GM12878 (cell line): ENCODE measurements at regions of chr19 and their contacts with region 1.

Region 1: DNA sequence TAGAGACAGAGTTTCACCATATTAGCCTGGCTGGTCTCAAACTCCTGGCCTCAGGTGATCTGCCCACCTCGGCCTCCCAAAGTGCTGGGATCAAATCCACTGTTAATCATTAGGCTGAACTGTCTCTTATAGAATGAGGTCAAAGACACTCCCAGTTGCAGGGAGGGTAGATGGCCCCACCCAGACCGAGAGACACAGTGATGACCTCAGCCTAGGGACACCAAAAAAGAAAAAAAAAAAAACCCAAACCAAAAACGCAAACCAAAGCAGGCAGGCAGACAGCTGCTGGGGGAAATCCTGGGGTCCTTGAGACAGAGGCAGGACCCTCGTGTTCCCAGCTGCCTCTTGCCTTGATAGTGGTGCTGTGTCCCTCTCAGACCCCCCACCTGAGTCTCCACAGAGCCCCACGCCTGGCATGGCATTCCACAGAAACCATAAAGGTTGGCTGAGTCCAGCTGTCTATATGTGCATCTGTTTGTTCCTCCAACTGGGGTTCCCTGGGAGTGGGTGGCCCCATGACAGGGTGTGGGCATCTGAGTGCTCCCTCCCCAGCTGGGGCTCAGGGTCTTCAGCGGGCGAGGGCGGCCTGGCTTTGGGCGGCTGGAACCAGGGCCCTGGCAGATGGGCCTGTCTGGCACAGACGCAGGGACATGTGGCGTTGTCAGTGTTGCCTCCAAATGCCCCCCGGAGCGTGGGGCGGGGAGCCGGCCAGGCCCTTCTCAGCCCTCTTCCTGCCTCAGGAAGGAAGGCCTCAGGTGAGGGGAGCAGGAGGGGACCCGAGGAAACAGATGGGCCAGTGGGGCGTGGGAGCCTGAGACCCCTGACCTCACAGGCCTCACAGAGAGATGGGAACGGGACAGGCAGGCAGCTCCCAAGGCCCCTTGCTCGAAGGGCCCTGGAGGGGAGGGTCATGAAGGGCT is 5.2 kb downstream of the DAND5 start:
- DNase-seq: no peak
- ATAC-seq: peak; percentile 68
- H3K4me3 ChIP-seq: no peak overlapping the region
- H3K27ac ChIP-seq: no peak overlapping the region
- H3K4me1 ChIP-seq: no peaks in the 10 kb centered on the region
- H3K27me3 ChIP-seq: no peaks in the 10 kb centered on the region
- CTCF ChIP-seq: no peak
- EP300 ChIP-seq: no peak
- POLR2A ChIP-seq: no peak
- RAD21 ChIP-seq: no peak

Region 2: DNA sequence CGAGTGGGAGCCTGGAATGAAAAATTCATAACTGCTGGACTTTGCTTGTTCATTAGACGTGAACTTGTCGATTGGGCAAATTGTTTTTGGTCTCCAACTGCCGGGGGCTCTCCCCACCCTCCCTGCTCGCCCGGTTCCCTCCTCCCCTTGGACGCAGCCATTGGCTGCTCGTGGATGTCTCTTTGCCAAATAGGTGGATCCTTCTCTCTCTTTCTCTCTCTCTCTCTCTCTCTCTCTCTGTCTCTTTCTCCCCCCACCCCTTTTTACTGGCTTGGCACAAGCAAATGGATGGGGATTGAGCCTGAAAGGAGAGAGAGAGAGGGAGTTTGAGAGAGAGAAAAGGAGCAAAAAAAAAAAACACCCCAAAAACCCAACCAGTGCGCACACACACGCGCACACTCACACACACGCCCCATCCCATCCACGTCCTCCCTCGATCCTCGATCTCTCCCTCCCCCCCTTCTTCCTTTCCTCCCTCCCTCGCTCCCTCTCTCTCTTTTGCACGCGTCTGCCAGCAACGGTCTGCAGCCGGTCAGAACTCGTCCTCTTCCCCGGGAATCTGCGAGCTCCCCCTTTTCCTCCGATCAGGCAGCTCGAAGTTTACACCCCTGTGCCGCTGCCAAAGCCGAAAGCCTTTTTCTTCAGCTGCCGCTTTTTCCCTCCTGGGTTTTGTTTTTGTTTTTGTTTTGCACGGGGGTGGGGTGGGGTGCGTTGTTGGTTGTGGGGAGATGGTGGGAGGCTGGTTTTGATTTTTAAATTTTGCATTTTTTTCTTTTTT is 48.5 kb after region 1 on chr19:
- CTCF ChIA-PET with region 1: interaction called, 13 read pairs
- POLR2A ChIA-PET with region 1: no interaction called
- RAD21 ChIA-PET with region 1: interaction called, 3 read pairs
- SMC1A ChIA-PET with region 1: no interaction called
- in situ Hi-C with region 1: no loop called
- intact Hi-C with region 1: no loop called
- DNase-seq: no peak
- ATAC-seq: peak; percentile 73
- H3K4me3 ChIP-seq: peak overlapping the region; percentile 62
- H3K27ac ChIP-seq: 0 out of 2 replicates have a peak overlapping the region, but pooled peaks have one; percentile 40
- H3K4me1 ChIP-seq: peaks cover 16% of the 10 kb centered on the region
- H3K27me3 ChIP-seq: peaks cover 9 to 17% of the 10 kb centered on the region in 2 experiments
- CTCF ChIP-seq: no peak
- EP300 ChIP-seq: no peak
- POLR2A ChIP-seq: no peak
- RAD21 ChIP-seq: no peak

Region 3: GRCh38 chr19:13033819-13034611 is 59.5 kb after region 1 on chr19:
- CTCF ChIA-PET with region 1: interaction called, 30 read pairs
- POLR2A ChIA-PET with region 1: no interaction called
- RAD21 ChIA-PET with region 1: interaction called, 13 read pairs
- SMC1A ChIA-PET with region 1: interaction called, 4 read pairs
- in situ Hi-C with region 1: no loop called
- intact Hi-C with region 1: loop called (anchors 5 kb)
- DNase-seq: no peak
- ATAC-seq: peak; percentile 95
- H3K4me3 ChIP-seq: no peak overlapping the region
- H3K27ac ChIP-seq: no peak overlapping the region
- H3K4me1 ChIP-seq: no peaks in the 10 kb centered on the region
- H3K27me3 ChIP-seq: peaks cover 0 to 2% of the 10 kb centered on the region in 2 experiments; a peak in 2 of 4 replicates
- CTCF ChIP-seq: peak; percentile 71 to 93 (median 90)
- EP300 ChIP-seq: no peak
- POLR2A ChIP-seq: no peak
- RAD21 ChIP-seq: peak; percentile 65

Region 4: GRCh38 chr19:13060964-13061927 is 86.7 kb after region 1 on chr19:
- CTCF ChIA-PET with region 1: interaction called, 247 read pairs
- POLR2A ChIA-PET with region 1: no interaction called
- RAD21 ChIA-PET with region 1: interaction called, 49 read pairs
- SMC1A ChIA-PET with region 1: interaction called, 45 read pairs
- in situ Hi-C with region 1: no loop called
- intact Hi-C with region 1: loop called (anchors 2 kb)
- DNase-seq: peak; percentile 11
- ATAC-seq: peak; percentile 99
- H3K4me3 ChIP-seq: peak overlapping the region; percentile 34; the same call in 1 of the 2 replicates
- H3K27ac ChIP-seq: no peak overlapping the region
- H3K4me1 ChIP-seq: no peaks in the 10 kb centered on the region
- H3K27me3 ChIP-seq: peaks cover 9 to 11% of the 10 kb centered on the region in 2 experiments
- CTCF ChIP-seq: peak; percentile 94 to 97 (median 96); a peak in 5 of 6 replicates
- EP300 ChIP-seq: no peak
- POLR2A ChIP-seq: no peak
- RAD21 ChIP-seq: peak; percentile 80

Region 5: DNA sequence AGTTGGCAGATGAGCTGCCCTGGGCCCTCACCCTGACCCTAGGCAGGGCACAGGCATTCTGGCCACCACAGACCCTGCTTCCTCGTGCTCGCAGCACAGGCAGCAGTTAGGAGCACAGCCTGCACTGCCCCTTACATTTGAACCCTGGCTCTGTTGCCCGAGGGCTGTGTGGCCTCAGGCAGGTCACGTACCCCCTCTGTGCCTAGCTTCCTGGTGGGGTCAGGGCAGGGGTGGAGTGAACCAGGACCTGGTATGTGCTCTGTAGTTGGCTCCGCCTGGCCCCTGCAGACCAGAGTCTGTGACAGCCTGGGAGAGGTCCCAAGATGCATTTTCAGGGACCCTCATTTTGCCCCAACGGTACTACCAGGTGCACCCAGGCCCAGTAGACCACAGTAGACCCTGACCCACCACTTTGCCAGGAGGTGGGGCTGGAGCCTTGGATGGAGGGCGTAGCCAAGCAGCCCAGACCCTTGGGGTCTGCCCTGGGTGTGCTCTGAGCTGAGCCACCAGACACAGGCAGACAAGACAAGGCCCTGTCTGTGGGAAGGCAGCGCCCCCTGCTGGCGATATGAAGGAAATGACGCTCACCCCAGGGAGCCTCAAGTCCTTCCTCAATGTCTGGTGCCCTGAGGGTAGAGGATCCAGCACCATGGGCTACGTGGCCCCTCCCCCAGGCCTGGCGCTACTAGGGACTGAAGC is 119.0 kb after region 1 on chr19:
- CTCF ChIA-PET with region 1: interaction called, 145 read pairs
- POLR2A ChIA-PET with region 1: interaction called, 3 read pairs
- RAD21 ChIA-PET with region 1: interaction called, 81 read pairs
- SMC1A ChIA-PET with region 1: interaction called, 48 read pairs
- in situ Hi-C with region 1: loop called (anchors 5 kb)
- intact Hi-C with region 1: loop called (anchors 2 kb)
- DNase-seq: no peak
- ATAC-seq: peak; percentile 89
- H3K4me3 ChIP-seq: no peak overlapping the region
- H3K27ac ChIP-seq: no peak overlapping the region
- H3K4me1 ChIP-seq: peaks cover 17% of the 10 kb centered on the region
- H3K27me3 ChIP-seq: peaks cover 2 to 7% of the 10 kb centered on the region in 2 experiments; a peak in 3 of 4 replicates
- CTCF ChIP-seq: peak; percentile 89 to 95 (median 92)
- EP300 ChIP-seq: no peak
- POLR2A ChIP-seq: no peak
- RAD21 ChIP-seq: peak; percentile 95

Region 6: GRCh38 chr19:13099073-13099999 is 124.8 kb after region 1 on chr19:
- CTCF ChIA-PET with region 1: interaction called, 145 read pairs
- POLR2A ChIA-PET with region 1: interaction called, 4 read pairs
- RAD21 ChIA-PET with region 1: interaction called, 81 read pairs
- SMC1A ChIA-PET with region 1: interaction called, 48 read pairs
- in situ Hi-C with region 1: loop called (anchors 5 kb)
- intact Hi-C with region 1: no loop called
- DNase-seq: no peak
- ATAC-seq: peak; percentile 18
- H3K4me3 ChIP-seq: no peak overlapping the region
- H3K27ac ChIP-seq: peak overlapping the region; percentile 48; the same call in 1 of the 2 replicates
- H3K4me1 ChIP-seq: peaks cover 50% of the 10 kb centered on the region
- H3K27me3 ChIP-seq: peaks cover 2 to 7% of the 10 kb centered on the region in 2 experiments
- CTCF ChIP-seq: no peak
- EP300 ChIP-seq: 0 out of 4 replicates have a peak, but pooled peaks of 1 of the 2 experiments have one; percentile 16
- POLR2A ChIP-seq: peak; percentile 53; the same call in 1 of the 2 replicates
- RAD21 ChIP-seq: no peak

Region 7: DNA sequence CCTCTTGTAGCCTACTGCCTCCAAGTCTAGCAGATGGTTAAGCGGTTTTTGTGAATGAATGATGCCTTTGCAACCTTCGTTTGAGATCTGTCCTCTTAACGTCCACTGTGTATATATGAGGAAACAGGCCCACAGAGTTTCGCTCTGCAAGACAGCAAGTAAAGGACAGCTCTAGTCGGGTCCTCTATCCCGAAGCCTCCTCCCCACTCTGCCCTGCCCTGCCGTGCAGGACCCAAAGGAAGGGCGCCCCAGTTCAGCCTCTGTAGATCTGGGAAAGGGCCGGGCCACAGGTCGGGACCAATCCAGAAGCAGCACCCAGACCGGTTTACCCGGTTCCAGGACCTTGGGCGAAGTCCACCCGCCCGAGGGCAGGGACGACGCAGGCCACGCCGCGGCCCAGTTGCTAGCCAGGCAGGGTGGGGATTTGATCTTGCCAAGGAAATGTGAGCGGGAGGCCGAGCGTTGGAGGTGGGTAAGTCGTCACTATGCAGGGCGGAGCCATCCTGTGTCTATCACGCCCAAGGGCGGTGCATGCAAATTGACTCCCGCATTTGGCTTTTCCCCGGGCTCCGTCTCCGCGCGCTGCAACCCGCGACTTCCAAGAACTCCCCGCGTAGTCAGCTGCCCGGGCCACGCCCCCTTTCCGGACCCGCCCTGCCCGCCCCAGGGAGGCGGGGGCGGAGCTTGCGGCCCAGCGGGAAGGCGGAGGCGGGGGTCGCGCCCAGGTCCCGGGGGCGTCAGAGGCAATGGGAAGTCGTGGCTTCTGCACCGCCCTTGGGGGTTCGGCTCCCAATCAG is 188.2 kb after region 1 on chr19:
- CTCF ChIA-PET with region 1: no interaction called
- POLR2A ChIA-PET with region 1: no interaction called
- RAD21 ChIA-PET with region 1: no interaction called
- SMC1A ChIA-PET with region 1: no interaction called
- in situ Hi-C with region 1: no loop called
- intact Hi-C with region 1: no loop called
- DNase-seq: peak; percentile 80
- ATAC-seq: peak; percentile 74
- H3K4me3 ChIP-seq: peak overlapping the region; percentile 74
- H3K27ac ChIP-seq: peak overlapping the region; percentile 85
- H3K4me1 ChIP-seq: peaks cover 54% of the 10 kb centered on the region
- H3K27me3 ChIP-seq: no peaks in the 10 kb centered on the region
- CTCF ChIP-seq: no peak
- EP300 ChIP-seq: no peak
- POLR2A ChIP-seq: peak; percentile 81
- RAD21 ChIP-seq: no peak

Region 8: DNA sequence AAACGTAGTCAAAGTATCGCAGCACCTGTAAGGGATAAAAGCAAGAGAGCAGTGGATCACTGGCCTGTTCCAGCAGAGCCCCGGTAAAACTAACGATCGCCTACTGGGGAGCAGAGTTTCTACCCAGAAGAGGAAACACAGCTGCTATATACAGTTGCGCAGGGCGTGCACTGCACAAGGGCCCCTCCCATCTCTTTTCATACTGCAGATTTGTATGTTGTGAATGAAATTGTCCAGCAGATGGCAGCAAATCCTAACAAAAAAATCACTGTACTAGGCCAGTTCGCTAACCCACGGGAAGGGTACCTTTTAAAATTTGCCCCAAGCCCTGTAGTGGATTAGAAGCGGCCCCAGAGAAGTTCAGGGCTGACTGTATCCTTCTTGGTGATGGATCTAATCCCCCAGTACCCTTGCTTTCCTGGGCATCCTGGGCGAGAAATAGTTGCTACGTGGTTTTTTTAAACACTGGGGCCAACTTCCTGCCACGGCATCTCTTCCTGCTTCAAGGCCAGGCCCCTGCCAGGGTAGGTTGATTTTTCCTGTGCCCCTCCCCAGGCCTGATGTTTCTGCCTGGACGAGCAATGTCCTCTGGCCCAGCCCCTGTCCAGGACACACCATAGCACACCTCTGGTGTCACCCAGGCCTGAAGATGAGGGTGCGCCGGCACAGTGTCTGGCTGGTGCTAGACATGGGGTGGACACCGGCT is 302.7 kb after region 1 on chr19:
- CTCF ChIA-PET with region 1: interaction called, 3 read pairs
- POLR2A ChIA-PET with region 1: no interaction called
- RAD21 ChIA-PET with region 1: no interaction called
- SMC1A ChIA-PET with region 1: no interaction called
- in situ Hi-C with region 1: no loop called
- intact Hi-C with region 1: loop called (anchors 5 kb)
- DNase-seq: peak; percentile 71
- ATAC-seq: peak; percentile 96
- H3K4me3 ChIP-seq: no peak overlapping the region
- H3K27ac ChIP-seq: 0 out of 2 replicates have a peak overlapping the region, but pooled peaks have one; percentile 24
- H3K4me1 ChIP-seq: peaks cover 11% of the 10 kb centered on the region
- H3K27me3 ChIP-seq: no peaks in the 10 kb centered on the region
- CTCF ChIP-seq: peak; percentile 43 to 79 (median 67); a peak in 5 of 6 replicates
- EP300 ChIP-seq: no peak
- POLR2A ChIP-seq: no peak
- RAD21 ChIP-seq: peak; percentile 82

Region 9: DNA sequence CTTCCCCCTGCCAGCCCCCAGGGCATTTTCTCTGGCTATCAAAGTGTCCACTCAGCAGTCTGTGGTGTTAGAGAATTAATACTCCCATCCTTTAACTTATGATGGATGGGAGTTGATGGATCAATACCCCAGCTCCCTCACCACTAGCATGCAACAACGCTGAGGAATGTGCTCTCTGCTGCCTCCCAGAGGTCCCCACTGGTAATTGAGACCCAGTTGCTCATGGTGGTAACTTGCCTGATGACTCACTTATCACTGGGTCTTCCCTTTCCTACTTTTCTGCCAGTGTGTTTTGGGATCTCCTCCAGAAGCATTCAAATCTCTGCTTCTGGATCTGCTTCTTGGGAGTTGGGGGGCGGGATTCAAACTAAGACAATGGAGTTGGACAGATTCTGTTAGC is 552.0 kb after region 1 on chr19:
- CTCF ChIA-PET with region 1: no interaction called
- POLR2A ChIA-PET with region 1: no interaction called
- RAD21 ChIA-PET with region 1: no interaction called
- SMC1A ChIA-PET with region 1: no interaction called
- in situ Hi-C with region 1: no loop called
- intact Hi-C with region 1: no loop called
- DNase-seq: no peak
- ATAC-seq: no peak
- H3K4me3 ChIP-seq: no peak overlapping the region
- H3K27ac ChIP-seq: no peak overlapping the region
- H3K4me1 ChIP-seq: no peaks in the 10 kb centered on the region
- H3K27me3 ChIP-seq: no peaks in the 10 kb centered on the region
- CTCF ChIP-seq: peak; percentile 17 to 36 (median 30); a peak in 4 of 6 replicates
- EP300 ChIP-seq: no peak
- POLR2A ChIP-seq: no peak
- RAD21 ChIP-seq: no peak